Uterus (tissue), 4 donors: ENCODE measurements at regions of chr2 and their contacts with region 1.

Region 1: GRCh38 chr2:126776692-126777619 is 121.0 kb downstream of the GYPC start:
- DNase-seq: peak; percentile 66 to 81
- H3K4me3 ChIP-seq: peak overlapping the region; percentile 29 to 46
- H3K27ac ChIP-seq: peak overlapping the region in 1 of 2 donors; percentile 1
- H3K4me1 ChIP-seq: no peaks in the 10 kb centered on the region
- H3K27me3 ChIP-seq: no peaks in the 10 kb centered on the region
- CTCF ChIP-seq: peak; percentile 84 to 96 (median 90)
- POLR2A ChIP-seq: no peak

Region 2: GRCh38 chr2:126527836-126528507 is 249.0 kb before region 1 on chr2:
- intact Hi-C with region 1: loop called (anchors 5 kb)
- DNase-seq: peak; percentile 64
- H3K4me3 ChIP-seq: no peak overlapping the region
- H3K27ac ChIP-seq: no peak overlapping the region
- H3K4me1 ChIP-seq: no peaks in the 10 kb centered on the region
- H3K27me3 ChIP-seq: no peaks in the 10 kb centered on the region
- CTCF ChIP-seq: peak; percentile 46 to 55 (median 51)
- POLR2A ChIP-seq: no peak